ENCODE measurements at regions of chr1 and their contacts with region 1.

Region 1: GRCh38 chr1:167401260-167401873 is 117.0 kb downstream of the CD247 start:
- DNase-seq: peak in 1 of 2 donors; percentile 26
- H3K4me3 ChIP-seq: no peak overlapping the region
- H3K27ac ChIP-seq: no peak overlapping the region
- H3K4me1 ChIP-seq: no peaks in the 10 kb centered on the region
- H3K27me3 ChIP-seq: no peaks in the 10 kb centered on the region
- CTCF ChIP-seq: peak in 2 of 3 donors; percentile 39 to 43
- POLR2A ChIP-seq: no peak

Region 2: DNA sequence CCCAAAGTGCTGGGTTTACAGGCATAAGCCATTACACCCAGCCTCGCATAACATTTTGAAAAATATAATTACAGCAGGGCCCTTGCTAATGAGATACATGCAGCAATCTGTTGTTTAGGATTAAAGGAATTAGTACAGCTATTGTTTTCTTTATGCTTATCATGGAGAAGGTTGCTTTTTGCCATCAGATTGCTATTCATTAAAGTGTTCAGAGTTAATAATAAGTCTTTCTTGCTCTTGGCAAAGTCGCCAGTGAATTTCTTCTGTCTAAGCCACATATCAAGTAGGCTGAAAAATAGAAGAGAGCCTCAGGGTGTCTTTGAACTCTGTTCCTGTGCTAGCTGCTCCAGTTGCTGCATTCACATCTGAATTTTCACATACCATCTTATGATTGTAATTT is 36.5 kb before region 1 on chr1:
- intact Hi-C with region 1: loop called (anchors 2 kb)
- DNase-seq: no peak
- H3K4me3 ChIP-seq: no peak overlapping the region
- H3K27ac ChIP-seq: no peak overlapping the region
- H3K4me1 ChIP-seq: no peaks in the 10 kb centered on the region
- H3K27me3 ChIP-seq: no peaks in the 10 kb centered on the region
- CTCF ChIP-seq: no peak
- POLR2A ChIP-seq: no peak

Region 3: DNA sequence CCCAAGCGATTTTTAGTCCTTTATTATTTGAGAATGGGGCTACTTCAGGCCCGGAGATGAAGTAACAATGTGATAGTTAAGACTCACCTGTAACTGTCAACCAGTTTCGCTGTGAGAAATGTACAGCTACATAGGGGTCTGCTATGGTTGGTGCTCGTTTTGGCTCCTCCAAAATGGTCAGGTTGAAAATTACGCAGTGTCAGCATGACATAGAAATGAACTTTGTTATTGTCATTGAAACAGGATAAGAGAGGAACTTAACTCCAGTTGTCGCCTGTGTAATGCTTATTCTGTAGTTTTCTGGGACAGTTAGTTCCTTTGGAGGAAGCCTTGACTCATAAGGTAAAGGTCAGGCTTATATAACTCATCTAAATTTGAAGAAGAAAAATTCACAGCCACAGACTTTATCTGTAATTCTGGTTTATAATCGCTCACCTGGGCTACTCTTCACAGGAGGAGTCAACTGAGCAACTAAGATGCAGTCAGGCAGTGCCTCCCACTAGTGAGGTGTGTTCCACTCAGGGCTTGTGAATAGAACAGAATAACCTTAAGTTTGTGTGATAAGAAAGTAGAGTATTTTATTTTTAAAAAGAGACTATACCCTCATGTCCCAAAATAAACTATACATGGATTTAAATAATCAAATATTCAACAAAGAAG is 14.0 kb before region 1 on chr1:
- intact Hi-C with region 1: no loop called
- DNase-seq: no peak
- H3K4me3 ChIP-seq: no peak overlapping the region
- H3K27ac ChIP-seq: no peak overlapping the region
- H3K4me1 ChIP-seq: no peaks in the 10 kb centered on the region
- H3K27me3 ChIP-seq: no peaks in the 10 kb centered on the region
- CTCF ChIP-seq: no peak
- POLR2A ChIP-seq: no peak

Region 4: GRCh38 chr1:167416506-167416905 is 15.1 kb after region 1 on chr1:
- intact Hi-C with region 1: loop called (anchors 1 kb)
- DNase-seq: no peak
- H3K4me3 ChIP-seq: no peak overlapping the region
- H3K27ac ChIP-seq: no peak overlapping the region
- H3K4me1 ChIP-seq: no peaks in the 10 kb centered on the region
- H3K27me3 ChIP-seq: no peaks in the 10 kb centered on the region
- CTCF ChIP-seq: no peak
- POLR2A ChIP-seq: no peak

Region 5: DNA sequence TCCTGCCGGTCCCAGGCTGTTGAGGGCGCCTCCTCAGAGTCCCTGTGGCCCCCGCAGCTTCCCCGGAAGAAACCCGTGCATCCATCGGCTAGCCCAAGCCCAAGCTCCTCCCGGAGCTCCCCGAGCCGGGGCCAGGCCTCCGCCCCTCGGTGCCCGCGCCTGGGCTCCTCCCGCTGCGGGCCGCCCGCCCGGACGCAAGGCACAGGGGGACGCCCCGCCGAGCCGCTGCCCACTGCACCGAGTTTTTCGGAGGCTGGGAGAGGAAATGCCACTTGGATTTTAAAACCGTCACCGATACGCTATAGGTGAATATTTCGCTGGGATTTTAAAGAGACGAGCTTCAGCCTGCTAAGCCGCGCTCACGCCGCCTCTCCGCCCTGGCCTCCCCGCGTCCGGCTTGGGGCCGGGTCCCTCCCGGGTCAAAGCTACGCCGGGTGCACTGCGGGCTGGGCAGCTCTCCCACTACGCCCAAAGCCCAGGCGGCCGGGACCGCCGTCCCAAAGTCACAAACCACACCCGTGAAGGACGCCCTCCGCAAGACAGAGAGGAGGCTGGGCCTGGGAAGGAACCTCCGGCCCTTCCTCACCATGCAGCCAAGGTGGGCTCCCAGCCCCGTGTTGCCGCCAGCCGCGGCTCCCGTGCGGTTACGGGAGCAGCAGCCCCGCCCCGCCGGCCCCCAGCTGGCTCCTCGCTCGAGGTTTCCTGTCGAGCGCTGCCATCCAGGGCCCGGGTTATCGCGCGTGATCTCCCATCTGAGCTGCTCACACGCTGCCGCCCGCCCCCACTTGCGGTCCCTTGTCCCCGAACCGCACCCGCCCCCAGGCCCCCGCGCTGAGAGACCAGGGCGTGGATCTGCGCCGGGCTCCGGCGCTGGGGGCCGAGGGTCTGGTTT is 53.8 kb after region 1 on chr1:
- intact Hi-C with region 1: no loop called
- DNase-seq: peak in 1 of 2 donors; percentile 45
- H3K4me3 ChIP-seq: peak overlapping the region; percentile 66 to 81 (median 76)
- H3K27ac ChIP-seq: peak overlapping the region; percentile 89 to 91
- H3K4me1 ChIP-seq: peaks cover 0 to 6% of the 10 kb centered on the region in 2 donors
- H3K27me3 ChIP-seq: no peaks in the 10 kb centered on the region
- CTCF ChIP-seq: no peak
- POLR2A ChIP-seq: no peak